ENCODE measurements at regions of chr6 and their contacts with region 1.

Region 1: DNA sequence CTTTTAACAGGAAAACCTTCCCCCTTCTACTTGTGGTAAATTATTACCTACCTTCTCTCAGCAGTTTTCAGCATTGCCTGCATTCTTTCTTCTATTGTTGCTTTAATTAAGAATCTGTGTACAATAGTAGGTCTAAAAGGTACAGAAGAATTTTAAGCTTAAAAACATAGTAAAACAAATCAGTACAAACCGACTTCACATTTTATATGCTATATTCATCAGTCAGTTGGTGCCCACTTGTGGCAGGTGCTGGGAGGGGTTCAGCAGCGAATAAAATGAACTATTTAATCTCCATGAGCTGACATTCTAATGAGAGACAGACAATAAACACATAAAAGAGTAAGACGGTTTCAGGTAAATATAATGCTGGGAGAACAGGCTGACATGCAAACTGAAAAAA is 73.4 kb upstream of the FBXO30 start:
- DNase-seq: peak; percentile 70
- H3K4me3 ChIP-seq: no peak overlapping the region
- H3K27ac ChIP-seq: no peak overlapping the region
- H3K4me1 ChIP-seq: peaks cover 9% of the 10 kb centered on the region
- H3K27me3 ChIP-seq: no peaks in the 10 kb centered on the region
- CTCF ChIP-seq: peak; percentile 22 to 46
- POLR2A ChIP-seq: no peak

Region 2: GRCh38 chr6:145734486-145735355 is 153.2 kb before region 1 on chr6:
- CTCF ChIA-PET with region 1: interaction called, 5 read pairs
- POLR2A ChIA-PET with region 1: no interaction called
- dilution Hi-C with region 1: no loop called
- intact Hi-C with region 1: loop called (anchors 5 kb)
- DNase-seq: peak; percentile 89
- H3K4me3 ChIP-seq: peak overlapping the region; percentile 51 to 60 (median 56)
- H3K27ac ChIP-seq: peak overlapping the region; percentile 87
- H3K4me1 ChIP-seq: peaks cover 18% of the 10 kb centered on the region
- H3K27me3 ChIP-seq: no peaks in the 10 kb centered on the region
- CTCF ChIP-seq: no peak
- POLR2A ChIP-seq: peak; percentile 91

Region 3: DNA sequence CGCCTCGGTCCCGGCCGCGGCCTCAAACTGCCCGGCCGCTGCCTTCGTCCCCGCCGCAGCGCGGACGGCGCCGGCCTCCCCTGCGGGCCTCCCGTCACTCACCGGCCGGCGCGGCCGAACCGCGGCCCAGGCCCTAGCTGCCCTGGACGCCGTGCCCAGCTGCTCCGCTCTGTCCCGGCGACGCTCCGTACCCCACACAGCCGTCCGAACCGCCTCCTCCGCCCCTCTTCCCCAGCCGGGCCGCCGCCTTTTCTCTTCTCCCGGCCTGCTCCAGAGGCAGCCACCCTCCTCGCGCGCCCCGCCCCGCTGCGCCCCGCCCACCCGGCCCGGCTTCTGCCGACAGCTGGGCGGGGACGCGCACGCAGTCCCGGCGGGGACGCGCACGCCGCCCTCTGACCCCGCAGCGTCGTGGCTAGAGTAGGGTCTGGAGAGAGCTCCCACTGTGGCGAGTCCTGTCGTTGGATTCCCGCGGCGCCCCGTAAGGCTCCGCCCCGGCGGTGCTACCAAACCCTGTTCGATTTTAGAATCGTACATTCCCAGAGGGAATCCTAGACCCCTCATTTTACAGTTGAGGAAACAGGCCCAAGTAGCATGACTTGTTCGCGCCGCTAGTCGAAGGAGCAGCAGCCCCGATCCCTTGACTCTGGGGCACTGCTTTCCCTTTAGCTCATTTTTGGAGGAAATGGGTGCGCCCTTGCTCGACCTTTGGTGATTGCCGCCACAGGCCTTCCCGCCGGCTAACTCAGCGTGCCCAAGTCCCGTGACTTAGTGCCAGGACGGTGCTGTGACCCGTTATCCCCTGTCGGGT is 73.3 kb before region 1 on chr6 and contains the start of gene FBXO30:
- CTCF ChIA-PET with region 1: interaction called, 11 read pairs
- POLR2A ChIA-PET with region 1: no interaction called
- dilution Hi-C with region 1: no loop called
- intact Hi-C with region 1: loop called (anchors 2 kb)
- DNase-seq: peak; percentile 95
- H3K4me3 ChIP-seq: peak within 1 kb of the TSS; percentile 56 to 95 (median 90)
- H3K27ac ChIP-seq: peak within 1 kb of the TSS; percentile 83
- H3K4me1 ChIP-seq: peaks cover 28% of the 10 kb centered on the region
- H3K27me3 ChIP-seq: no peaks in the 10 kb centered on the region
- CTCF ChIP-seq: no peak
- POLR2A ChIP-seq: peak; percentile 71
- total RNA-seq, gene FBXO30: 10.4 and 11.1 TPM in 2 replicates

Region 4: GRCh38 chr6:145823328-145823944 is 64.5 kb before region 1 on chr6:
- CTCF ChIA-PET with region 1: no interaction called
- POLR2A ChIA-PET with region 1: no interaction called
- dilution Hi-C with region 1: no loop called
- intact Hi-C with region 1: loop called (anchors 2 kb)
- DNase-seq: no peak
- H3K4me3 ChIP-seq: no peak overlapping the region
- H3K27ac ChIP-seq: no peak overlapping the region
- H3K4me1 ChIP-seq: no peaks in the 10 kb centered on the region
- H3K27me3 ChIP-seq: no peaks in the 10 kb centered on the region
- CTCF ChIP-seq: no peak
- POLR2A ChIP-seq: no peak

Region 5: GRCh38 chr6:145866456-145867396 is 21.2 kb before region 1 on chr6:
- CTCF ChIA-PET with region 1: no interaction called
- POLR2A ChIA-PET with region 1: no interaction called
- dilution Hi-C with region 1: no loop called
- intact Hi-C with region 1: no loop called
- DNase-seq: no peak
- H3K4me3 ChIP-seq: no peak overlapping the region
- H3K27ac ChIP-seq: no peak overlapping the region
- H3K4me1 ChIP-seq: no peaks in the 10 kb centered on the region
- H3K27me3 ChIP-seq: no peaks in the 10 kb centered on the region
- CTCF ChIP-seq: no peak
- POLR2A ChIP-seq: no peak

Region 6: DNA sequence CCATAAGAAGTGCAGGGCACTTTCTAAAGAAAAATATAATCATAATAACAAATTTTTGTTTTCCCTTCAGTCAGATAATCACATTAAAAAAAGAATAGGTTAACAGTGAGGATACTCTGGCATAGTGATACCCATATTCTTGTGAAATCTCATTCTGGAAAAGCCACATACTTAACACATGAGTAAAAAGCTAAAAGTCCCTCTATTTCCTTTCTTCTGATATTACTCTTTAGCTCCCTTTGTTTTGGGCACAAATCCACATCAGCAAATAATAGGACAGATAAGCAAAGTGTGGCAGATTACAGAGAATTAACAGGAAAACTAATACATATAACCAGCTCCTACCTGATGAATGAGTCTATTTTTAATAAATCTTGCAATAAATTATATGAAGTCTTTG is 60.4 kb after region 1 on chr6:
- CTCF ChIA-PET with region 1: no interaction called
- POLR2A ChIA-PET with region 1: no interaction called
- dilution Hi-C with region 1: no loop called
- intact Hi-C with region 1: no loop called
- DNase-seq: no peak
- H3K4me3 ChIP-seq: no peak overlapping the region
- H3K27ac ChIP-seq: no peak overlapping the region
- H3K4me1 ChIP-seq: no peaks in the 10 kb centered on the region
- H3K27me3 ChIP-seq: no peaks in the 10 kb centered on the region
- CTCF ChIP-seq: no peak
- POLR2A ChIP-seq: no peak

Measured in endothelial cell of umbilical vein (primary cell).